ENCODE measurements at regions of chr17 and their contacts with region 1.

Region 1: GRCh38 chr17:42527273-42527703 is 8.8 kb upstream of the NAGLU start:
- DNase-seq: peak in 6 of 10 donors; percentile 58 to 91 (median 62)

Region 2: GRCh38 chr17:42322382-42323267 is 204.7 kb before region 1 on chr17:
- intact Hi-C with region 1: loop called (anchors 5 kb)
- DNase-seq: peak; percentile 85 to 98 (median 93)

Measured in posterior cingulate gyrus (tissue), 11 donors.